Activated CD4-positive, alpha-beta memory T cell treated with anti-CD3 and anti-CD28 coated beads for 36 hours (primary cell): ENCODE measurements at regions of chr20 and their contacts with region 1.

Region 1: DNA sequence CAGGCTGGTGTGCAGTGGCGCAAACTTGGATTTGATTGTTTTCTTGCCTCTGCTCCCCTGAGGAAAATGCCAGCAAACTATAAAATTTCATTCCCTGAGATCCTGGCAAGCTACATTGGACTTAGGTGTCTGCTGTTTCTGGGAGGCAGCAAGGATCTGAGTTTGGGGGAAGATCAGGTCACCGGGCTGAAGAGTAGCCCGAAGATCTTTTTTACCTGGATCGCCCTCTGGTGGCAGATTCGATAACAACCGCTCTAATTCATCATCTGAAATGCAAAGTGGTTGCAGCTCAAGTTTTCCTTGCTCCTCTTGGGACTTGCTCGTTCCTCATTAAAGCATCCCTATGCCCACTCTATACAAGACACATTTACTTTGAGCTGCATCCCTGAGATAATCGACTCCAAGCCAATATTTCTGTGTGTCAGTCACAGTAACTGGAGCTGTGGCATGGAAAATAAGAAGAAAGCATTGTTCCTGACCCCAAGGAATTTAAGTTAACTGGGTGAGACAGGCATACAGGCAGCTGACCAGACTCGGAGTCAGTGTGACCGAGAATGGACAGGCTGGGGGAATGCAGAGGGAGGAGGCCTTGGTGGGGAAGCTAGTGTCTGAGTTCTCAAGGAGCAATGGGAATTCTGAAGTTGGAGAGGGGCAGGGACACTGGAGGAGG is 131.8 kb upstream of the PROKR2 start:
- DNase-seq: peak; percentile 64
- H3K4me3 Mint-ChIP-seq: no peak overlapping the region
- H3K27ac Mint-ChIP-seq: no peak overlapping the region
- H3K4me1 Mint-ChIP-seq: no peaks in the 10 kb centered on the region
- H3K27me3 Mint-ChIP-seq: peaks cover 13% of the 10 kb centered on the region

Region 2: DNA sequence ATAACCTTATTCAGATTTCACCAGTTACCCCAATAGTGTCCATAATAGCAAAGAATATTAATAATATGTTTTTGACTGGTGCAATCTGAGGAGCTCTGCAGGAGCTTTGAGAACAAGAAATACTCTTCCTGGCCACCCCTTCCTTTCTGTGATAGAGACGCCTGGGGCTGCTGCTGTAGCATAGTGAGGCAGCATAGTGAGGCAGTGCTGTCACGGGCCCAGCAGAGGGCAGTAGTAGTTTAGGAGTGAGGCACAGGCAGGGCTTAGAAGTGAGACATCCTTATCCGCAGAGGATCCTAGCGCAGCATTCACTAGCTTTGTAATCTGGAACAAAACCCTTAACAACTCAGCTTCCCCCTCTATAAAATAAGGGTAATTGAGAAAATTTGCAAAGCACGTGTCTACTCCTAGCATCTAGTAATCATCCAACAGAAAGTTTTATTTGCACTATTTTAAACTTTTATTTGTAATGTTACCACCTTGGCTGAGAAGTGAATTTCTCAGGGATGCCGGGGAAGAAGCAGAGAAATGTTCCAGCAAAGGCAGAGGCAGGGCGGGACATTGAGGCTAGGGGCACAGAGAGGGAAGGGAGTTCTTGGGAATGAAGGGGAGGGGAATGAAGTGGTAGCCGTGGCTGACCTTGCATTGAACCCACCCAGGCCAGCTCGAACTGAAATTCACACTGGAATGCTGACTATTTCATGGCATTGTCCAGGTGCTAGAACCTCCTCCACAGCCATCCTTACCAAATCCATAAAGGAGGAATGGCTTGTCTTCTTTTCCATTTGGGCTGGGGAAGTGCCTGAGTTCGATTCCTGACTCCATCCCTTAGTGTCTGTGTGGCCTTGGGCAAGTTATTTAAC is 243.0 kb before region 1 on chr20:
- CTCF ChIA-PET with region 1: interaction called, 57 read pairs
- POLR2A ChIA-PET with region 1: no interaction called
- intact Hi-C with region 1: loop called (anchors 1 kb)
- DNase-seq: peak; percentile 79
- H3K4me3 Mint-ChIP-seq: no peak overlapping the region
- H3K27ac Mint-ChIP-seq: no peak overlapping the region
- H3K4me1 Mint-ChIP-seq: peaks cover 2% of the 10 kb centered on the region
- H3K27me3 Mint-ChIP-seq: no peaks in the 10 kb centered on the region

Region 3: DNA sequence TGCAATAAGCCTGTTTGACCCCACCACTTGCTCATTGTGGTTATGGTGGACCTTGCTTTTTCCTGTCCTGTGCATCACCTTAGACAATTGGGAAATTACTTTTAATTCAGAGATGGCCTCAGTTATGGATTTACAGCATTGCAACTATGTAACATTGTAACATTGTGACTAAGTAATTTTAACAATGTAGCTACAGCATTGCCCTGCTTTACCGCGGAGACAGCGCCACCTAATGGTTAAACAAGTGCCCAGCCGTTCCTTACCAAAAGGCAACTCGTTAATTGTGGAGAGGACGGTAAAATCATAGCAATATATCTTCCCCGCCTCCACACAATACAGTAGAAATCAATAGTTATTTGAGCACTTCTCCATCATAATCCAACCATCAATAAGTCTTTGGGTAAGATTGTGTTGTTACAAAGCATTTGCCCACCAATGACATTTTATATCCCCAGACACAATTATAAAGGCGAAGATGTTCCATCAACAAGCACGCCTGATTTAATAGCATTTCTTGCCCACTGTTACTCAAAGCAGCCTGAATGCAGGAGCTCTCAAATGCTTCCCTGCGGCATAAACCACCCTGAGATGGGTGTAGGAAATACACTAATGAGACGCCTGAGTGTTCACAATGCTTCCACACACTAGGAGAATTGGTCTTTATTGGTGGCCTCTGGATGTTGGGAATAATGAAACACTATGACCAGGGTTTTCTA is 225.5 kb before region 1 on chr20:
- CTCF ChIA-PET with region 1: interaction called, 11 read pairs
- POLR2A ChIA-PET with region 1: no interaction called
- intact Hi-C with region 1: no loop called
- DNase-seq: peak; percentile 76
- H3K4me3 Mint-ChIP-seq: no peak overlapping the region
- H3K27ac Mint-ChIP-seq: no peak overlapping the region
- H3K4me1 Mint-ChIP-seq: no peaks in the 10 kb centered on the region
- H3K27me3 Mint-ChIP-seq: no peaks in the 10 kb centered on the region

Region 4: GRCh38 chr20:5402903-5403531 is 45.6 kb before region 1 on chr20:
- CTCF ChIA-PET with region 1: interaction called, 7 read pairs
- POLR2A ChIA-PET with region 1: no interaction called
- intact Hi-C with region 1: loop called (anchors 5 kb)
- DNase-seq: peak; percentile 19
- H3K4me3 Mint-ChIP-seq: no peak overlapping the region
- H3K27ac Mint-ChIP-seq: no peak overlapping the region
- H3K4me1 Mint-ChIP-seq: no peaks in the 10 kb centered on the region
- H3K27me3 Mint-ChIP-seq: peaks cover 5% of the 10 kb centered on the region

Region 5: GRCh38 chr20:5433352-5433751 is 15.2 kb before region 1 on chr20:
- CTCF ChIA-PET with region 1: interaction called, 11 read pairs
- POLR2A ChIA-PET with region 1: no interaction called
- intact Hi-C with region 1: no loop called
- DNase-seq: no peak
- H3K4me3 Mint-ChIP-seq: no peak overlapping the region
- H3K27ac Mint-ChIP-seq: no peak overlapping the region
- H3K4me1 Mint-ChIP-seq: no peaks in the 10 kb centered on the region
- H3K27me3 Mint-ChIP-seq: peaks cover 9% of the 10 kb centered on the region

Region 6: GRCh38 chr20:5550733-5551529 is 102.3 kb after region 1 on chr20:
- CTCF ChIA-PET with region 1: no interaction called
- POLR2A ChIA-PET with region 1: no interaction called
- intact Hi-C with region 1: no loop called
- DNase-seq: no peak
- H3K4me3 Mint-ChIP-seq: no peak overlapping the region
- H3K27ac Mint-ChIP-seq: no peak overlapping the region
- H3K4me1 Mint-ChIP-seq: peaks cover 23% of the 10 kb centered on the region
- H3K27me3 Mint-ChIP-seq: no peaks in the 10 kb centered on the region

Region 7: DNA sequence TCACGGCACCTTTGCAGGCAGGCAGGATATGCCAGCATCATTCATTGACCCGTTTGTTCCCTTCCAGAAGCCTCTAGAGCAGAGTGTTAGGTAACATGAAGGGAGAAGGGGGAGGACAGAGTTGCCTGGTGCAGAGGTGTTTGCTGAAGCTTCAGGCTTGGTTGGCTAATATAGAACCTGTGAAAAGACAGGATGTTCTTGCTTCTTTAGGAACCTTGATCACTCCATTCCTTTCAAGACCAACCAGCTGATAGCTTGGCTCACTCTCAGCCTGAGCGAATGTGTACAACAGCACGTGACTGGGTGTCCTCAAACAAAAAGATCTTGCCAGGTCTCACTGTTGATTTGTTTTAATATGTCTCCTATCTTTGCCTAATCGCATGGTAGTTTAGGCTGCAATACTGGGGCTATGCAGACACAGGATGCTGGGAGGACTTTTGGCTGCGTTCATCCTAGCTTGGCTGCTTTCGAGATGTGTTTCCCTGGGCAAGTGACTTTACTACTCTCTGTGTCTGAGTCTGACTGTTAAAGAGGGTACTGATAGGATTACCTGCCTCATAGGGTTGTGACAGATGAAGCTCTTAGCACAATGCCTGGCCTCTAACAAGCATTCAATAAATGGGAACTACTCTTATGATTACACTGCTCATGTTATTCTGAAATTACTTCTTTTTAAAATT is 317.6 kb after region 1 on chr20:
- CTCF ChIA-PET with region 1: no interaction called
- POLR2A ChIA-PET with region 1: no interaction called
- intact Hi-C with region 1: no loop called
- DNase-seq: no peak
- H3K4me3 Mint-ChIP-seq: no peak overlapping the region
- H3K27ac Mint-ChIP-seq: no peak overlapping the region
- H3K4me1 Mint-ChIP-seq: peaks cover 23% of the 10 kb centered on the region
- H3K27me3 Mint-ChIP-seq: no peaks in the 10 kb centered on the region